ENCODE measurements at regions of chr16 and their contacts with region 1.

Region 1: DNA sequence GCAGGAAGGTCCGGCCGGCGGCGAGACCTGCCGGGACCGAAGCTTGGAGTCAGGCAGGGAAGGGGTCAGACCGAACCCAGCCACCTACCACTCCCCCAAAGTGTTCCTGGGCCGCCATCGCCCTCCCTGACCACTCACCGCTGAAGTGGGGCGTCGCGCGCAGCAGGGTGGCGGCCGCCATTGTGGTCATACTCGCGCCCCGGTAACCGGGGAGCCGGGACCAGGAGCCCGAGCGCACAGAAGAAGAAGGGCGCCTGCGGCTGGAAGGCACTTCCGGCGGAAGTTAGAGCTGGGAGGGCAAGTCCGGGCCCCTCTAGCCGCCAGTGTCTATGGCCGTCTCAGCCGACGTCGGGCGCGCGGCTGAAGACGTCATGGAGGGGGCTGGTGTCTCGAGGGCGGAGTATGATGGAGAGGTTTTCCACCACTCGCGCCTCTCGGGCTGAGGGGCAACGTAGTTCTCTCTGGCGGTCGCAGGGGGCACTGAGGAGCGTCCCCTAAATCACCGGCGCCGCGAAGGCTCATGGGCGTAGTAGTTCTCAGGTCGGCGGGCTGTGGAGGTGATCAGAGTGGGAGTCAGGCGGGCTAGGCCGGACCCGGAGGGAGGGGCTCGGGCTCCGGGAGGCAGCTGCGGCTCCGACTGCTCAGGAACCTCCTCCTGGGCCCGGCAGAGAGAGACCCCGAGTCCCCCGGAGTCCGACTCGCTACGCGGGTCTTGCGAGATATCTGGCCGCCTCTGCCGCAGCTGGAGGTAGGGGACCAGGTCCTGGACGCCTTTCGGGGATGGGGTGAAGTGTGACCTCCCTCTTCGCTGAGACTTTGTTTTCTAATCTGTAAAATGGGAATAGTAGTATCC is at the start of gene TUFM:
- DNase-seq: peak; percentile 98
- CTCF ChIP-seq: peak; percentile 82

Region 2: DNA sequence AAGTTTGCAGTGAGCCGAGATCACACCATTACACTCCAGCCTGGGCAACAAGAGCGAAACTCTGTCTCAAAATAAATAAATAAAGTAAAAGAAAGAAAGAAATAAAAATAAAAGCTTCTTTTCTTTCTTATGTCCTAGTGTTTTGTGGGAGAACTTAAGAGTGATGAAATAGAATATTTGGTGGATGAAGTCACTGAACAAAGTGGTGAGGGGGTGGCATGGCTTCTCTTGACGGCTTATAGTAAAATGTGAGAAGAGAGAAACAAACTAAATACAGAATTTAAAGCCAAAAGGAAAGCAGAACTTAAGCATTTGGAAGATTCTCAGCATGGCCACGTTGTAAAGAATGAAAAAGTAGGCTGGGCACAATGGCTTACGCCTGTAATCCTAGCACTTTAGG is 277.3 kb before region 1 on chr16:
- CTCF ChIA-PET with region 1: no interaction called
- POLR2A ChIA-PET with region 1: no interaction called
- DNase-seq: no peak
- CTCF ChIP-seq: no peak

Region 3: DNA sequence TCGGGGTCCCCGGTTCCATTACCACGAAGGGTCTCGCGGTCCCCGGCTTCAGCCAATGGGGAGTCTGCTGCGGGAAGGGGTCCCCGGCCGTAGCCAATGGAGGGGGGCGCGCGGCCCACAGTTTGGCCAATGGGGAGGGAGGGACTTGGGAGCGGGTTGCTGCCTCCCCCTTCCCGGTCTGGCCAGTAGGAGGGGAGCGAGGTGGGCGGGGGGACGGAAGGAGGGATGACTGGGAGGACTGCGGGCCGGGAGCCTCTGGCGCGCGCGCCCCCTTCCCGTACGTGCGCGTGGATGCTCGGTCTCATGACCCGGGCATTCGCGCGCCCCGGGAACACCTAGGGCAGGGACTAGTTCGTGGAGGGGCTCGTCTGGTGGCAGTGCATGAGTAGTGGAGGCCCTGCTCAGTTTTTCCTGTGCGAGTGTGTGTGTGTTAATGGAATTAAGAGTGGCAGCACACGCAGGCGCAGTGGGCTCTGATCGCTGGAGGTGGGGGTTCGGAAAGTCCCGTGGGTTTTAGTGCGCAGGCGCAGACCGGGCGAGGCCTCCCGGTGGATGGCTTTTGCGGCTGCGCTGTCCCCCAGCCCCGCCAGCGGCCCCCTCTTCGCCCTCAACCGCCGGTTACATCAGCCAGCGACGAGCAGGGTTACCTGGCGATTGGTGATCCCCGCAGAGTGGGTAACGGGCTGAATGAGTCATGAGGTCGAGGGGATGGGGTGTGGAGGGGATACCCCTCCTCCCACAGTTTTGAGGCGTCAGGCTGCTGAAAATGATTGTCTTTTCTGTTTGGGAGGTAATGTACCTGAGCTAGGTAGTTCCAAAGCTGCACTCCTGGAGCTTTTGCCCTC is 22.2 kb before region 1 on chr16:
- CTCF ChIA-PET with region 1: interaction called, 12 read pairs
- POLR2A ChIA-PET with region 1: interaction called, 13 read pairs
- DNase-seq: peak; percentile 95
- CTCF ChIP-seq: no peak

Region 4: DNA sequence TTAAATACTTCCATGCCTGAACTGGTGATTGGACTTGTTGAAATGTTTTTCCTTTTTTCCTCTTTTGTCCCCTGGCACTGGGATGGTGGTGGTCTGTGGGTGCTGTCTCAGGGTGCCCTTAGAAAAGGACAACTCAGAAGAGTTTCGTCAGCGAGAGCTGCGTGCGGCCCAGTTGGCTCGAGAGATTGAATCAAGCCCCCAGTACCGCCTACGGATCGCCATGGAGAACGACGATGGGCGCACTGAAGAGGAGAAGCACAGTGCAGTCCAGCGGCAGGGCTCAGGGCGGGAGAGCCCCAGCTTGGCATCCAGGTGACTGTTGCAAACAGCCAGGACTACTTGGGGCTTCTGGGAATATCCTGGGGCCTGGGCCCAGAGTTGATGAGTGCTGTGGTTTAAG is 16.6 kb before region 1 on chr16:
- CTCF ChIA-PET with region 1: interaction called, 12 read pairs
- POLR2A ChIA-PET with region 1: interaction called, 3 read pairs
- DNase-seq: no peak
- CTCF ChIP-seq: no peak

Region 5: DNA sequence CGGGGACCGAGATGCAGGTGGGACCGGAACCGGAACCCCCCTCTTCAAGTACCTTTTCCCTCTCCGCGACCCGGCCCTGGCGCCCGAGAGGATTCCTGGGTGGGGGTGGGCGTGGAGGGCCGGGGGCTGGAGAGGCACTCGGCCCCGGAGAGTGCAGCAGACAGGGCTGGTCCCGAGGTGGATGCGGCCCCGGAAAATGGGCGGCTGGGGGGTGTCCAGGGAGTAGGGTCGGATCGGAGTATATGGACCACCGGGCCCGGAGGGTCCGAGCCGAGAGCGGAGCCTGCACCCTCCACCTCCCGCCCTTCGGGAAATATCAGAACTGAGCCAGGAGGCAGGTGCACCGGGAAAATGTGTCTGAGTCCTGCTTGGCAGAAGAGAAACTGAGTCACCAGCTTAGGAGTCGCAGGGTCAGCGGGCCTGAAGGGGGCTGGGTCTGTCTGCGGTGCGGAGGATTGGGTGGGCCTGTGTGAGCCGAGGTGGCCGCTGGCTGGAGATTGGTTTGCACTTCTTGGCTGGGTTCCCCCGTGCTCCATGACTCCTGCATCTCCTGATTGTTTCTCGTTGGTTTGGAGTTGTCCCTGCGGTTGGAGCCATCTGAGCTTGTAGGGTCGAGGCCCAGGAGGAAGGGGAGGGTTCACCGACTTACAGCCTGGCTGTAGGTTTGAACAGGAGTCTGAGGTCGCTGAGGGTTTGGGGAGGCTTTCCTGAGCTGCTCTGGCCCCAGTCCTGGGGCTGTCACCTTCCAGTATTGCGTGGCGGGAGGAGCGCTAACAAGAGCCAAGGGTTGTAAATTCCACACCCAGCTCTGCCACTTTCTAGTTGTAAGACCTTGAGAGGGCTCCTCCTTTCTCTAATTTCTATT is 17.9 kb after region 1 on chr16:
- CTCF ChIA-PET with region 1: interaction called, 48 read pairs
- POLR2A ChIA-PET with region 1: interaction called, 6 read pairs
- DNase-seq: no peak
- CTCF ChIP-seq: no peak

Region 6: GRCh38 chr16:28873536-28874201 is 27.4 kb after region 1 on chr16:
- CTCF ChIA-PET with region 1: interaction called, 10 read pairs
- POLR2A ChIA-PET with region 1: no interaction called
- DNase-seq: peak; percentile 74
- CTCF ChIP-seq: peak; percentile 55

Region 7: GRCh38 chr16:28943281-28943680 is 97.0 kb after region 1 on chr16:
- CTCF ChIA-PET with region 1: interaction called, 53 read pairs
- POLR2A ChIA-PET with region 1: interaction called, 3 read pairs
- DNase-seq: no peak
- CTCF ChIP-seq: no peak

Region 8: DNA sequence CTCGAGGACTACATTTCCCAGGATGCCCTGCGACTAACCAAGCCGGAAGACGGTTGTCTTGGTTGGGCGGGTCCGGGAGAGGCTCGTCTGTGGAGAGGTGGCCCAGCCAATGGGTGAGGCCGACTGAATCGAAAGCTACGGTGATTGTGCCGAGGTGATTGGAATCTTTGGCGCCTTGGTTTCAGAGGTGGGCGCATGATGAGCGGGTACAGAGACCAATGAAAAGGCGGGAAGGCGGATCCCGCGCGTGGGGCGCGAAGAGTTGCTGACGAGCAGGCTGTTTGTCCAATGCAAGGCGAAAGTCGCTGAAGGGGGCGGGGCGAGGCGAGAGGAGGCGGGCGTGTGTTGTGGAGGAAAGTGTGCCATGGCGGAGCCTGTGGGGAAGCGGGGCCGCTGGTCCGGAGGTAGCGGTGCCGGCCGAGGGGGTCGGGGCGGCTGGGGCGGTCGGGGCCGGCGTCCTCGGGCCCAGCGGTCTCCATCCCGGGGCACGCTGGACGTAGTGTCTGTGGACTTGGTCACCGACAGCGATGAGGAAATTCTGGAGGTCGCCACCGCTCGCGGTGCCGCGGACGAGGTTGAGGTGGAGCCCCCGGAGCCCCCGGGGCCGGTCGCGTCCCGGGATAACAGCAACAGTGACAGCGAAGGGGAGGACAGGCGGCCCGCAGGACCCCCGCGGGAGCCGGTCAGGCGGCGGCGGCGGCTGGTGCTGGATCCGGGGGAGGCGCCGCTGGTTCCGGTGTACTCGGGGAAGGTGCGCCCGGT is 104.5 kb after region 1 on chr16 and contains the start of gene NFATC2IP:
- CTCF ChIA-PET with region 1: interaction called, 53 read pairs
- POLR2A ChIA-PET with region 1: no interaction called
- DNase-seq: peak; percentile 99
- CTCF ChIP-seq: no peak